ENCODE measurements at regions of chr7 and their contacts with region 1.

Region 1: DNA sequence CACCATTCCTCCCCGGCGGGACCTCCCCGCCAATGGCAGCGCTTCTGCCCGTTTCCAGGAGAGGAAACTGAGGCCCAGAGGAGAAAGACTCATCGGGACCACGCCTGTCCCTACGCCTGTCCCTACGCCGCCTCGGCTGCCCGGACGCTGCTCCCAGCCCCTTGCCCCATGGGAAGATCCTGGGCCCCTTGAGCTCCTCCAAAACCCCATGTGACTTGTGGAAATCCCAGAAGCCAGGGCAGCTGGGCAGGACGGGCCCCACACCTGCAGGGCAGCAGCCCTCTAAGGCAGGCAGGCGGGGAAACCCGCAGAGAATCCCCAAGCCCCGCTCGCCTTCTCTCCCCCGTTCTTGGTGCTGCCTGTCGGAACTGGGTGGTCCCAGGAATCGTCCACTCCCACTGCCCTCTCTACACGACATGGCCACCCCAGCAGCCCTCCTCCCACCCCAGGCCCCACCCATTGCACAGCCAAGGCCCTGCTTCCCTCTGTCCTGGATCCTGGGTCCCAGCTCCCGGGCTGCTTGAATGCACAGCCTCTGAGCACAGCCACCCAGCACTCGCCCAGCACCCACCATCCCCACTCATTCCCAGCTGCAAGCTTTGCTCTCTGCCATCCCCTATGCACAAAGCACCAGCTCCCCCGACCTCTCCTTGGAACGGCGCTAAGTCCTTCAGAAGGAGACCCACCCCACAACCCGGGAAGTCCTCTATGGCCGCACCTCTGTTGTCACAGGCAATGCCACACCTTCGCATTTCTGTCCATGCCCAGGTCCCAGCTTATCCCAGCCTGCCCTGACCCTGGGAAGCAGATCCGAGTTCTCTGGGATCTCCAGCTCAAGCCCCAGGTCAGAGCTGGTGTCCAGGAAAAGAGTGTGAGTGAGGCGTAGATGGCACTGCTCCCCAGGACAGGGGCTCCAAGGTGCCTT is 50.6 kb downstream of the SLC29A4 start:
- DNase-seq: no peak
- H3K4me3 ChIP-seq: no peak overlapping the region
- H3K27ac ChIP-seq: no peak overlapping the region
- H3K27me3 ChIP-seq: no peaks in the 10 kb centered on the region
- CTCF ChIP-seq: no peak

Region 2: DNA sequence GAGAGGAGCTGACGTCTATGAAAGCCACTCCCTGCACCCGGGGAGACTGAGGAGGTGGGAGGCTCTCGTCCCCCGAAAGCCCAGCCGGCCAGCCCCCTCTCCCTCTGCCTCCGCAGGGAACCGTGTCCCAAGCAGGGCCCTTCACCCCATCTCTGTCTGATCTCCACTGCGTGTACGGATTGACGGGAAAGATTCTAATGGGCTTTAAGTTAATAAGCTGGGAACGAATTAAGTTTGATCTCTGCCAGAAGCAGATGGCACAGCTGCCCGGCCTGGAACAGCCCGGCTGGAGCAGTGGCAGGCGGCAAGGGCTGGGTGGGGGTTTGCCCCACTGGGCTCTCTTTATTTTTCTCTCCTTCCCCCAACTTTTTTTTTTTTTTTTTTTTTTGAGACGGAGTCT is 56.8 kb before region 1 on chr7:
- CTCF ChIA-PET with region 1: no interaction called
- POLR2A ChIA-PET with region 1: interaction called, 10 read pairs
- DNase-seq: no peak
- H3K4me3 ChIP-seq: no peak overlapping the region
- H3K27ac ChIP-seq: no peak overlapping the region
- H3K27me3 ChIP-seq: no peaks in the 10 kb centered on the region
- CTCF ChIP-seq: no peak

Measured in AG04450 (cell line).